Right ventricle myocardium superior (tissue), 1 donor: ENCODE measurements at regions of chr3 and their contacts with region 1.

Region 1: GRCh38 chr3:129596194-129597086 is 10.0 kb downstream of the PLXND1 start:
- DNase-seq: peak; percentile 94
- ATAC-seq: peak; percentile 75

Region 2: GRCh38 chr3:129490242-129491045 is 106.0 kb before region 1 on chr3:
- intact Hi-C with region 1: loop called (anchors 5 kb)
- DNase-seq: peak; percentile 88
- ATAC-seq: peak; percentile 94

Region 3: GRCh38 chr3:129663026-129663446 is 66.6 kb after region 1 on chr3:
- intact Hi-C with region 1: no loop called
- DNase-seq: no peak
- ATAC-seq: no peak